ENCODE measurements at regions of chr15 and their contacts with region 1.

Region 1: GRCh38 chr15:31128919-31129768 is 27.6 kb upstream of the TRPM1 start:
- DNase-seq: peak; percentile 88
- ATAC-seq: peak; percentile 93
- H3K4me3 Mint-ChIP-seq: no peak overlapping the region
- H3K27ac Mint-ChIP-seq: no peak overlapping the region
- H3K4me1 Mint-ChIP-seq: peaks cover 3% of the 10 kb centered on the region
- H3K27me3 Mint-ChIP-seq: no peaks in the 10 kb centered on the region

Region 2: DNA sequence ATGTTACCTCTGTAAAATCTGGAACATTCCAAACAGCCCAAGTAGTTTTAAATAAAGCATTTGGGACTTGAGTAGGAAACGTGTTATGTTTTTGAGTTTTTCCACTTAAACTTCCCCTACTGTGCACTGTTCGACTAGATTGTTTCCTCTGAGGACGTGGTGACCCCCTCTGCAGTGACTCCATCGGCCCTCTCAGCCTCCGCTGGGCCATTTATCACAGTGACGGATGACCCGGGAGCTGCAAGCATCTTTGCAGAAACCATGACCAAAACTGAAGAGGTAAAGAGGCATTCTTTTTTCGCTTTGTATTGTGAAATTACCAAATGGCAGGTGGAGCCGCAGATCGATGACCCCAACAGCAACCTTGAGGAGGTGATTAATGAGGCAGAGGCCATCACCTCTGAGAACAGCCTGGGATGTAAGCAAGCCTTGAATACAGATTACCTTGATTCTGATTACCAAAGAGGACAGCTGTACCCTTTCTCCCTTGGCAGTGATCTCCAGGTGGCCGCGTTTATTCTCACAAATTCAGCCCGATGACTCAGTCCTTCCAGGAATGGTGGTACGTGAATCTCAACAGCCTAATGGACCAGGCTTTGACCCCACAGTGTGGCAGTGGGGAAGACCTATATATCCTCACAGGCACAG is 304.5 kb before region 1 on chr15:
- CTCF ChIA-PET with region 1: interaction called, 4 read pairs
- POLR2A ChIA-PET with region 1: no interaction called
- intact Hi-C with region 1: loop called in 1 of 2 experiments (anchors 10 kb)
- DNase-seq: no peak
- ATAC-seq: no peak
- H3K4me3 Mint-ChIP-seq: peak overlapping the region; percentile 78
- H3K27ac Mint-ChIP-seq: peak overlapping the region; percentile 33
- H3K4me1 Mint-ChIP-seq: no peaks in the 10 kb centered on the region
- H3K27me3 Mint-ChIP-seq: no peaks in the 10 kb centered on the region

Region 3: GRCh38 chr15:30859091-30859874 is 269.9 kb before region 1 on chr15:
- CTCF ChIA-PET with region 1: interaction called, 19 read pairs
- POLR2A ChIA-PET with region 1: no interaction called
- intact Hi-C with region 1: no loop called
- DNase-seq: peak; percentile 26
- ATAC-seq: no peak
- H3K4me3 Mint-ChIP-seq: no peak overlapping the region
- H3K27ac Mint-ChIP-seq: no peak overlapping the region
- H3K4me1 Mint-ChIP-seq: peaks cover 3% of the 10 kb centered on the region
- H3K27me3 Mint-ChIP-seq: no peaks in the 10 kb centered on the region

Region 4: DNA sequence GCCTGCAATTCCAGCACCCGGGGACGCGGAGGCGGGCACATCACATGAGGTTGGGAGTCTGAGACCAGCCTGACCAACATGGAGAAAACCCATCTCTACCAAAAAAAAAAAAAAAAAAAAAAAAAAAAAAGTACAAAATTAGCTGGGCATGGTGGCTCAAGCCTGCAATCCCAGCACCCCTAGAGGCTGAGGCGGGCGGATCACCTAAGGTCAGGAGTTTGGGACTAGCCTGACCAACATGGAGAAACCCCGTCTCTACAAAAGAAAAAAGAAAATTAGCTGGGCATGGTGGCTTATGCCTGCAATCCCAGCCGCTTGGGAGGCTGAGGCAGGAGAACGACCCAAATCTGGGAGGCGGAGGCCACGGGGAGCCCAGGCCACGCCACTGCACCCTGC is 232.9 kb before region 1 on chr15:
- CTCF ChIA-PET with region 1: interaction called, 8 read pairs
- POLR2A ChIA-PET with region 1: no interaction called
- intact Hi-C with region 1: loop called in 1 of 2 experiments (anchors 10 kb)
- DNase-seq: no peak
- ATAC-seq: no peak
- H3K4me3 Mint-ChIP-seq: no peak overlapping the region
- H3K27ac Mint-ChIP-seq: no peak overlapping the region
- H3K4me1 Mint-ChIP-seq: peaks cover 3% of the 10 kb centered on the region
- H3K27me3 Mint-ChIP-seq: peaks cover 2% of the 10 kb centered on the region

Region 5: GRCh38 chr15:30922480-30923311 is 206.4 kb before region 1 on chr15:
- CTCF ChIA-PET with region 1: no interaction called
- POLR2A ChIA-PET with region 1: no interaction called
- intact Hi-C with region 1: loop called in 1 of 2 experiments (anchors 10 kb)
- DNase-seq: no peak
- ATAC-seq: no peak
- H3K4me3 Mint-ChIP-seq: no peak overlapping the region
- H3K27ac Mint-ChIP-seq: no peak overlapping the region
- H3K4me1 Mint-ChIP-seq: no peaks in the 10 kb centered on the region
- H3K27me3 Mint-ChIP-seq: no peaks in the 10 kb centered on the region

Region 6: GRCh38 chr15:31111091-31111647 is 18.0 kb before region 1 on chr15:
- CTCF ChIA-PET with region 1: interaction called, 12 read pairs
- POLR2A ChIA-PET with region 1: no interaction called
- intact Hi-C with region 1: no loop called
- DNase-seq: no peak
- ATAC-seq: no peak
- H3K4me3 Mint-ChIP-seq: no peak overlapping the region
- H3K27ac Mint-ChIP-seq: no peak overlapping the region
- H3K4me1 Mint-ChIP-seq: no peaks in the 10 kb centered on the region
- H3K27me3 Mint-ChIP-seq: peaks cover 2% of the 10 kb centered on the region

Region 7: DNA sequence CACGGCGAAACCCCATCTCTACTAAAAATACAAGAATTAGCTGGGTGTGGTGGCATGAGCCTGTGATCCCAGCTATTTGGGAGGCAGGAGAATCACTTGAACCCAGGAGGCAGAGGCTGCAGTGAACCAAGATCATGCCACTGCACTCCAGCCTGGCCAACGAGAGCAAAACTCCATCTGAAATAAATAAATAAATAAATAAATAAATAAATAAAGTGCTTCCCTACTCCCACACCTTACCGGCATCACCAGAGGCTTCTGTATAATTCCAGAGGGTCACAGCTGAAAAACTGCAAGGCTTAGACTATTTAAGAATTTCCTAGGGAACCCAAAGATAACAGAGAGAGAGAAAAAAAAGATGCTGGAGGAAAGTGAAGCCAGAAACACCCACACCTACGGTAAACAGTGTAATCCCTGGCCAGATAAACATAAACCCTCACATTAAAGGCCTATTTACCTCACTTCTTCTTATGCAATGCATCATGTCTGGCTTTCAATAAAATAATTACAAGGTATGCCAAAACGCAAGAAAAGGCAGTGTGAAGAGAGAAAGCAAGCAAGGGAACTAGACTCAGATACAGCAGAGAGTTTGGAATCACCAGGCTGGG is 12.6 kb before region 1 on chr15:
- CTCF ChIA-PET with region 1: interaction called, 12 read pairs
- POLR2A ChIA-PET with region 1: no interaction called
- intact Hi-C with region 1: no loop called
- DNase-seq: no peak
- ATAC-seq: no peak
- H3K4me3 Mint-ChIP-seq: no peak overlapping the region
- H3K27ac Mint-ChIP-seq: no peak overlapping the region
- H3K4me1 Mint-ChIP-seq: no peaks in the 10 kb centered on the region
- H3K27me3 Mint-ChIP-seq: peaks cover 1% of the 10 kb centered on the region

Region 8: DNA sequence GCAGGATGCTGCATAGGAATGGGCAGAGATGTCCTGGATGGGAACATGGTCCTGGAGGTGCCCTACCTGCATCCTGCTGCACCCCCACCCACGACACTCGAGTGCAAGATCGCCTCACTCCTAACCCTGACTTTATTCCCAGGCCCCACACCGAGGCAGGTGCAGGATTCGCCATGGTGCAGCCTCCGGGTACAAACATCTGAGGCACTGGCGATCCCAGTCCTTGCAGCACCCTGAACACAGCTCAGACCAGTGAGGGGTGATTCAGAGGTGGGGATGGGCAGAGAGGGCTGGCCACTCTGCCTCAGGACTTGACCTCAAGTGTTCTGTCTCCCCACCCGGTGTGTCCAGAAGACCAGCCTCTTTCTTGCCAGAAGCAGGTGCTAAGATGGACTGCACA is 246.6 kb after region 1 on chr15:
- CTCF ChIA-PET with region 1: no interaction called
- POLR2A ChIA-PET with region 1: no interaction called
- intact Hi-C with region 1: no loop called
- DNase-seq: no peak
- ATAC-seq: no peak
- H3K4me3 Mint-ChIP-seq: no peak overlapping the region
- H3K27ac Mint-ChIP-seq: peak overlapping the region; percentile 48
- H3K4me1 Mint-ChIP-seq: peaks cover 55% of the 10 kb centered on the region
- H3K27me3 Mint-ChIP-seq: no peaks in the 10 kb centered on the region